H1 (cell line): ENCODE measurements at regions of chr7 and their contacts with region 1.

Region 1: GRCh38 chr7:143214789-143215679 is 6.8 kb upstream of the TAS2R40 start:
- DNase-seq: peak; percentile 49 to 66
- H3K4me3 ChIP-seq: no peak overlapping the region
- H3K27ac ChIP-seq: no peak overlapping the region
- H3K4me1 ChIP-seq: no peaks in the 10 kb centered on the region
- H3K27me3 ChIP-seq: no peaks in the 10 kb centered on the region
- CTCF ChIP-seq: peak in 2 of 3 experiments; percentile 99 to 100; a peak in 3 of 4 replicates
- EP300 ChIP-seq: no peak
- POLR2A ChIP-seq: no peak
- RAD21 ChIP-seq: peak; percentile 100

Region 2: GRCh38 chr7:142880876-142881505 is 334.0 kb before region 1 on chr7:
- CTCF ChIA-PET with region 1: interaction called, 21 read pairs
- POLR2A ChIA-PET with region 1: no interaction called
- DNase-seq: peak; percentile 23 to 78
- H3K4me3 ChIP-seq: no peak overlapping the region
- H3K27ac ChIP-seq: no peak overlapping the region
- H3K4me1 ChIP-seq: peaks cover 0 to 8% (median 2%) of the 10 kb centered on the region in 4 experiments; a peak in 2 of 7 replicates
- H3K27me3 ChIP-seq: 0 out of 7 replicates have a peak, but pooled peaks cover 0 to 2% (median 0%) of the 10 kb centered on the region in 4 experiments
- CTCF ChIP-seq: peak; percentile 83 to 96 (median 95)
- EP300 ChIP-seq: no peak
- POLR2A ChIP-seq: no peak
- RAD21 ChIP-seq: peak; percentile 77 to 84

Region 3: DNA sequence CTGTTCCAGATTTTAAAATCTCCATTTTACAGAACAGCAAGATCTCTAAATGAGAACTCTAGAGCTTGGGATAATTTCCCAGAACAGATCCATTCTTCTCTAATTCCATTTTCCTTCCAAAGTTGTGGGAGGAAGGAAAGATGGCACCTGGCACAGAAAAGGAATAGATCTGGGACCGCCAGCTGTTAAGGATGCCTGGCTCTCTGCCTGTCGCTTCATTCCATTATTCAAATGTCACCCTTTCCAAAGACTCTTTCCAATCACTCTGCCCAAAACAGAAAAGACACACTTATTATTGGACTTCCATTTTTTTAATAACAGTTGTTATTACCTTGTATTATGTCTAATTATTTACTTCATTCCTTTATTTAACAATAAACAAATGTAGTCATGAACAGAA is 187.4 kb before region 1 on chr7:
- CTCF ChIA-PET with region 1: interaction called, 12 read pairs
- POLR2A ChIA-PET with region 1: no interaction called
- DNase-seq: no peak
- H3K4me3 ChIP-seq: no peak overlapping the region
- H3K27ac ChIP-seq: no peak overlapping the region
- H3K4me1 ChIP-seq: no peaks in the 10 kb centered on the region
- H3K27me3 ChIP-seq: no peaks in the 10 kb centered on the region
- CTCF ChIP-seq: no peak
- EP300 ChIP-seq: no peak
- POLR2A ChIP-seq: no peak
- RAD21 ChIP-seq: no peak

Region 4: DNA sequence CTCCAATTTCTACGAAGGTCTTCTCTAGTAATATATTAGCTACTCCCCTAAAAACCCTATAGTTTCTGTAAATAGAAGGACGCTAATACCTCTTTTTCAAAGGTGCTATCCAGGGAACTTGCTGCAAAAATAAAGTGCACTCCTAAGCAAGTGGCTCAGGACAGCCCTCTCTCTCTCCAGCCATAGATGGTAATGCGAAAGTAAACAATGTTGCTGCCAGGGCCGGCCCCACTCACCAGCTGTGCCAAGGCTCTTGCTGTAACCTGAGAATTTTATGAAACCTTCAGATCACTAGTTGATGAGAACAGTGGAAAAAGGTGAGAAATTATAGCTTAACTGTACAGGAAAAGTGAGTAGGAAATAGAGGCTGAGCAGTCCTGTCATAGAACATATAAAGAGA is 42.7 kb before region 1 on chr7:
- CTCF ChIA-PET with region 1: interaction called, 17 read pairs
- POLR2A ChIA-PET with region 1: no interaction called
- DNase-seq: no peak
- H3K4me3 ChIP-seq: no peak overlapping the region
- H3K27ac ChIP-seq: no peak overlapping the region
- H3K4me1 ChIP-seq: no peaks in the 10 kb centered on the region
- H3K27me3 ChIP-seq: no peaks in the 10 kb centered on the region
- CTCF ChIP-seq: no peak
- EP300 ChIP-seq: no peak
- POLR2A ChIP-seq: no peak
- RAD21 ChIP-seq: no peak

Region 5: GRCh38 chr7:143203386-143203785 is 11.6 kb before region 1 on chr7:
- CTCF ChIA-PET with region 1: interaction called, 43 read pairs
- POLR2A ChIA-PET with region 1: no interaction called
- DNase-seq: no peak
- H3K4me3 ChIP-seq: no peak overlapping the region
- H3K27ac ChIP-seq: no peak overlapping the region
- H3K4me1 ChIP-seq: 0 out of 7 replicates have a peak, but pooled peaks cover 0 to 3% (median 0%) of the 10 kb centered on the region in 4 experiments
- H3K27me3 ChIP-seq: no peaks in the 10 kb centered on the region
- CTCF ChIP-seq: no peak
- EP300 ChIP-seq: no peak
- POLR2A ChIP-seq: no peak
- RAD21 ChIP-seq: no peak